Activated T-helper 1 cell treated with anti-CD3 and anti-CD28 coated beads, Interleukin-12 subunit alpha, Interleukin-12 subunit beta, Interleukin-2, Interleukin-4 antibody, amounts not matched to agents 30 ng/mL and 10 ng/mL and 1 ng/mL, durations not matched to agents 14 hours and 24 hours and 36 hours (primary cell): ENCODE measurements at regions of chr1 and their contacts with region 1.

Region 1: DNA sequence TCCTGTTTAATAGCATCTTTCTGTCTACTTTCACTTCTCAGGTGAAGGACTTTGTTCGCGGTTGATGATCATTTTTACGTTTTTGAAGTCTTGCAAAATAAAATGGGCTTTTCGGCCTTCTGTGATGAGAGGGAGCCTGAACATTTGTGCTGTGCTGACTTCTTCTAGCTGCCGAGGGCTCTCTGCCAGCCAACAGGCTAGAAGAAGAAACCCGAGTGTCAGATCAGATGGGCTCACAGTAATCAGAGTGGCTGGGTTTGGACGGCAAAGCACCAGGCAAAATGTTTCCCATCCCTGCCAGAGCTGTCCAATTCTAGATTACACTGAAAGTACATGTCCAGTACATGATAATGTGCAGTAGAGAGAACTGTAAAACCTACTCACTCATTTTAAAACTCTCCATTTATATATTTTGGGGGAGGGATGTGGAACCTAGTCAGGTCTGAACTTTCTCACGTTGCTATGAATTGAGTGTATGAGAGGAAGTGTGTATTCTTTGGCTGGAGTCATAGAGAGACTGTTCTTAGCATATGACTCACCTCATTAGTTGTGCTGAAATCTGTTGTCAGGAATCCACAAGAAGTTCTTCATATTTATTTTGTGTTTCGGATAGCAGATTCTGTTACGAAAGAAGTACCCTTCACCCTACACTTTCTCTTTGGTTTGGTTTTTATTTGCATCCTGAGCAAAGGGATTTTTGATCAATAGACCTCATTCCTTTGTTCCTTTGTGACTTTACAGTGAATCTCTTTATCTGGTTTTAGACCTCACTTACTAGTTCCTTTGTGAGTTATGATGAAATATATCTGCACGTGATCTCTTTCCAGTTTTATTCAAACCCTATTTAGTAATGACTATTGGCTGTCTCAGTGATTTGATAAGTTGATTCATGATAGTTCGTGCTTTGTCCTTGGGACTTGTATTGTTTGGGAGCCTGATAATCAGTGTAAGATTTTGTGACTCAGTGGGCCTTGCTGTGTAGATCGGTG is 4.8 kb downstream of the ATP1A1 start:
- DNase-seq: peak; percentile 20
- H3K4me3 Mint-ChIP-seq: peak overlapping the region; percentile 85
- H3K27ac Mint-ChIP-seq: peak overlapping the region; percentile 85
- H3K4me1 Mint-ChIP-seq: peaks cover 77% of the 10 kb centered on the region
- H3K27me3 Mint-ChIP-seq: no peaks in the 10 kb centered on the region

Region 2: DNA sequence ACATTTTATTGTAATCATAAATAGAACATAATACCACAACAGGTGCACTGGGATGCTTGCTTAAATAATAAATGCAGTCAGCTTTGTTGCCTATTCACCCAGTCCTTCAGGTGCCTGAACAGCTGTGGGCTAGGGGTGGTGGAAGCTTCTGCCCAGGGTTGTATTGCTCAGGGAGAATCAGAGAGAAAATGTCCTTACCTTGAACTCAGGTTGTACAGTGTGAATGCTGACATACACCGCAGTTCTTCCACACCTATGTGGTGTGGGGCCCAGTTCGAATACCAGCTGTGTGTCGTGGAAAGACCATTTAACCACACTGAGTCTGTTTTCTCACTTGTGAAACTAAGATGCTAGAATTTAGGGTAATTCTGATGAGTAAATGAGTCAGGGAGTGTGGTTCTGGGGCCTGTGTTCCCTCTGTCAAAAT is 120.5 kb before region 1 on chr1:
- intact Hi-C with region 1: loop called (anchors 1 kb)
- DNase-seq: peak; percentile 6
- H3K4me3 Mint-ChIP-seq: peak overlapping the region; percentile 31
- H3K27ac Mint-ChIP-seq: peak overlapping the region; percentile 69
- H3K4me1 Mint-ChIP-seq: peaks cover 31% of the 10 kb centered on the region
- H3K27me3 Mint-ChIP-seq: peaks cover 5% of the 10 kb centered on the region

Region 3: GRCh38 chr1:116365353-116365780 is 12.5 kb before region 1 on chr1:
- intact Hi-C with region 1: no loop called
- DNase-seq: no peak
- H3K4me3 Mint-ChIP-seq: no peak overlapping the region
- H3K27ac Mint-ChIP-seq: no peak overlapping the region
- H3K4me1 Mint-ChIP-seq: no peaks in the 10 kb centered on the region
- H3K27me3 Mint-ChIP-seq: peaks cover 9% of the 10 kb centered on the region

Region 4: DNA sequence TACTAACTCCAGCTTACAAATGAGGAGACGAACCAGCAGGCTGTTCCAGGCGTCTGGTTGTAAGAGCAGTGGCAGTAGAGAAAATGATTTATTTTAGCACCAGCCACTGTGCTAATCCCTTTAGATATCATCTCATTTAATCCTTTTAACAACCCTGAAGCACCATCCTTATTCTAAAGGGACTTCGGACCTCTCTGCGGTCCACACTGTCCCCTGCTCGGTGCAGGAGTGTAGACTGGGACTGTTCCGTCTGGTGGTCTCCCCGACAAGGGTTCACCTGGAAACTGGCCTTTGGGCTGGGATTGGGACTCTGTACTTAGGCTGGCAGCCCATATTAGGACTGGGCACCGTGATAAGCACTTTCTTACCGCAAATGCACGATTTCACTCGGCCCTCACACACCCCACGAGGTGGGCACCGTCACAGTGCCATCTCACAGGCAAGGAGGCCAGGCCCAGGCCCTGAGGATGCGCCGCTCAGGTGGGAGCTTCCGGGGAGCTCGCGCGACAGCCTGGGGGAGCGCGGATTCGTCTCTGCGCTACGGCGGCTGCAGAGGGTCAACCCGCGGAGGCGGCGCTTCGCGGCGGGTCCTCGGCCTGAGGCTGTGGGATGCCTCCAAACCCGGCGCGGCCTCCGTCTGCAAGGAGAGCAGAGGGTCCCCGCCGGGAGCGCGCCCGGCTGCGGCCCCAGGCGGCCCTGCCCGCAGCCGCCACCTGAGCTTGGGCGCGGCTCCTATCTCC is 40.4 kb after region 1 on chr1:
- intact Hi-C with region 1: loop called (anchors 1 kb)
- DNase-seq: peak; percentile 84
- H3K4me3 Mint-ChIP-seq: peak overlapping the region; percentile 90
- H3K27ac Mint-ChIP-seq: peak overlapping the region; percentile 83
- H3K4me1 Mint-ChIP-seq: peaks cover 60% of the 10 kb centered on the region
- H3K27me3 Mint-ChIP-seq: peaks cover 6% of the 10 kb centered on the region

Region 5: DNA sequence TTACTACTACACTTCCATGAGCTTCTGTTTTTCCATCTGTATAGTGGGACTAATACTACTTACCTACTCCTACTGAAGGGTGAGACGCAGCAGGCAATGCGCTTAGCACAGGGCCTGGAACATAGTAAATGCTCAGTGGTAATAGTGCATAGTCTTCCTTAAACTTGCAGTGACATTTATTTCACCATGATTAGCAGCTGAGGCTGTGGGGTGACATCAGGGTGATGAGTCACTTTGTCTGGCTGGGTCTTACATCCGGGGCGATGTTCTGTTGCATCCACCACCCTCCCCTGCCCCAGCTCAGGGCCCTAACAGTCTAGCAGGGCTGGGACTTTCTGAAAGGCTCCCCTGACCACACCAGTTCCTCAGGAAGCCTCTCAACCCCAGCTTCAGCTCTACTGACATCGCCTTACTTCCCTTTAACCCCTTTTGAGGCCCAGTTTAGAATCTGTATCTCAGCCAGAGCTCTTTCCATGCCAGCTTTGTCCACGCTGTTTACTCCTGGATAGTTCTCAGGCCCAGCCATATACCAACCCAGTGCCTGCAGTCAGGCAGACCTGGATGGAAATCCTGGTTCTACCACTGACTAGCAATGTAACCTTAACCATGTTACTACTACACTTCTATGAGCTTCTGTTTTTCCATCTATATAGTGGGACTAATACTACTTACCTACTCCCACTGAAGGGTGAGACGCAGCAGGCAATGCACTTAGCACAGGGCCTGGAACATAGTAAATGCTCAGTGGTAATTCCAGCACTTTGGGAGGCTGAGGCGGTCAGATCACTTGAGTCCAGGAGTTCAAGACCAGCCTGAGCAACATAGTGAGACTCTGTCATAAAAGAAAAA is 126.7 kb after region 1 on chr1:
- intact Hi-C with region 1: loop called (anchors 1 kb)
- DNase-seq: peak; percentile 86
- H3K4me3 Mint-ChIP-seq: peak overlapping the region; percentile 3
- H3K27ac Mint-ChIP-seq: peak overlapping the region; percentile 88
- H3K4me1 Mint-ChIP-seq: peaks cover 91% of the 10 kb centered on the region
- H3K27me3 Mint-ChIP-seq: no peaks in the 10 kb centered on the region

Region 6: GRCh38 chr1:116556289-116557006 is 178.6 kb after region 1 on chr1:
- intact Hi-C with region 1: loop called (anchors 1 kb)
- DNase-seq: peak; percentile 67
- H3K4me3 Mint-ChIP-seq: peak overlapping the region; percentile 9
- H3K27ac Mint-ChIP-seq: peak overlapping the region; percentile 77
- H3K4me1 Mint-ChIP-seq: peaks cover 86% of the 10 kb centered on the region
- H3K27me3 Mint-ChIP-seq: no peaks in the 10 kb centered on the region

Region 7: DNA sequence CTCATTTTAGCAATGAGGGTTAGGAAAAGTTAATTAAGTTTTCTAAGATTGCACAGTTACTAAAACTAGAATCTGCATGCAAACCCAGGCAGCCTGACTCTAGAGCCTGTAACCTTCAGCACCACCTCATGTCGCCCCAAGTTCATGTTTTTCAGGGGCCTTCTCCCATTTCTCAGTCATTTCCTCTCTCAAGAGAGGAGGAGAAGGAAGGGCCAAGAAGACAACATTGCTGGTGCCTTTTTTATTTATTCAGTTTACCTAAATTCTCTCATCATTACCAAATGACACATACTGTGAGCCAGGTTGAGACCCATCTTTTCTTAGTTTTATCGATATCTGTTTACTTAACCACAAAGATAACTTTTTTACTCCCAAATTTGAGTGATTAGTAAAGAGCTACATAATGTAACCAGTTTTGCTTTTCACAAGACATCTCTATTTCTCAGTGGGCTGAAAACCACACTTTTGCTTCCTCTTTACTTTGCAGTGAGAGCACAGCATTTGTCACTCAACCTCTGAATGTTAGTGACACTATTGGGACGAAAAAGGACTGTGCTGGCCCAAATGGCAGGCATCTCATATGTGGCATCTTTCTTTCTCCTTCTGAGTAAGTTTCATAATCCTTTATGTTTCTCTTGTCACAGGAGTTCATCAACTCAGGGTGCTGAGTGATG is 623.6 kb after region 1 on chr1 and contains the start of gene CD101:
- intact Hi-C with region 1: loop called (anchors 5 kb)
- DNase-seq: no peak
- H3K4me3 Mint-ChIP-seq: peak within 1 kb of the TSS; percentile 3
- H3K27ac Mint-ChIP-seq: peak within 1 kb of the TSS; percentile 79
- H3K4me1 Mint-ChIP-seq: peaks cover 36% of the 10 kb centered on the region
- H3K27me3 Mint-ChIP-seq: peaks cover 3% of the 10 kb centered on the region
- total RNA-seq, gene CD101: 0.80 and 1.0 TPM in 2 replicates

Region 8: GRCh38 chr1:117664314-117664713 is 1286.5 kb after region 1 on chr1:
- intact Hi-C with region 1: loop called (anchors 5 kb)
- DNase-seq: peak; percentile 73
- H3K4me3 Mint-ChIP-seq: peak overlapping the region; percentile 57
- H3K27ac Mint-ChIP-seq: peak overlapping the region; percentile 84
- H3K4me1 Mint-ChIP-seq: peaks cover 88% of the 10 kb centered on the region
- H3K27me3 Mint-ChIP-seq: peaks cover 6% of the 10 kb centered on the region